ENCODE measurements at regions of chr5 and their contacts with region 1.

Region 1: GRCh38 chr5:156920042-156920860 is 42.8 kb downstream of the TIMD4 start:
- DNase-seq: peak; percentile 77
- ATAC-seq: peak; percentile 68
- H3K4me3 ChIP-seq: peak overlapping the region; percentile 63
- H3K27ac ChIP-seq: peak overlapping the region; percentile 93
- H3K4me1 ChIP-seq: peaks cover 17% of the 10 kb centered on the region
- H3K27me3 ChIP-seq: no peaks in the 10 kb centered on the region
- CTCF ChIP-seq: no peak
- EP300 ChIP-seq: peak; percentile 80 to 88; a peak in 3 of 4 replicates
- POLR2A ChIP-seq: no peak
- RAD21 ChIP-seq: no peak

Region 2: DNA sequence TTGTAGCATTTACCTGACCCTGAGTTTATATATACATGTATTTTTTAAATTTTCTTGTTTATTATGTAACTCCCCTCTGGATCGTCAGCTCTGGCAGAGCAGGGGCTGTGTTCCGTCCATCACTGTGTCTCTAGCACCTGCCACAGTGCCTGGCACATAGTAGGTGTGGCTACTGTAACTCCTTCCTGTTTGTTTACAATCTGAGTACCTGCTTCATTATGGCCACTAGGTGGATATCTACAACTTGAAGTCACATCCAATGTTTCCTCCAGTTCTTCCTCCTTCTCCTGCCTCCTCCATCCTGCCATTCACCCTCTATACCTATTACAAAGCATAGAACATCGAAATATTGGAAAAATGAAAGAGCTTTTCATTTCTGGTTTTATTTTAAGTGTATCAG is 84.3 kb before region 1 on chr5:
- CTCF ChIA-PET with region 1: interaction called, 17 read pairs
- POLR2A ChIA-PET with region 1: interaction called, 7 read pairs
- RAD21 ChIA-PET with region 1: interaction called, 4 read pairs
- SMC1A ChIA-PET with region 1: interaction called, 19 read pairs
- in situ Hi-C with region 1: no loop called
- intact Hi-C with region 1: no loop called
- DNase-seq: no peak
- ATAC-seq: peak; percentile 88
- H3K4me3 ChIP-seq: no peak overlapping the region
- H3K27ac ChIP-seq: no peak overlapping the region
- H3K4me1 ChIP-seq: no peaks in the 10 kb centered on the region; the same call in 1 of the 2 replicates
- H3K27me3 ChIP-seq: no peaks in the 10 kb centered on the region
- CTCF ChIP-seq: peak; percentile 32 to 47 (median 39); a peak in 5 of 6 replicates
- EP300 ChIP-seq: no peak
- POLR2A ChIP-seq: no peak
- RAD21 ChIP-seq: peak; percentile 43

Region 3: GRCh38 chr5:156893517-156893916 is 26.7 kb before region 1 on chr5:
- CTCF ChIA-PET with region 1: interaction called, 26 read pairs
- POLR2A ChIA-PET with region 1: interaction called, 28 read pairs
- RAD21 ChIA-PET with region 1: interaction called, 218 read pairs
- SMC1A ChIA-PET with region 1: interaction called, 104 read pairs
- in situ Hi-C with region 1: no loop called
- intact Hi-C with region 1: loop called (anchors 2 kb)
- DNase-seq: peak; percentile 52
- ATAC-seq: peak; percentile 82
- H3K4me3 ChIP-seq: no peak overlapping the region
- H3K27ac ChIP-seq: peak overlapping the region; percentile 47; the same call in 1 of the 2 replicates
- H3K4me1 ChIP-seq: peaks cover 23% of the 10 kb centered on the region
- H3K27me3 ChIP-seq: no peaks in the 10 kb centered on the region
- CTCF ChIP-seq: no peak
- EP300 ChIP-seq: peak in 1 of 2 experiments; percentile 51; a peak in 1 of 4 replicates
- POLR2A ChIP-seq: no peak
- RAD21 ChIP-seq: no peak

Region 4: DNA sequence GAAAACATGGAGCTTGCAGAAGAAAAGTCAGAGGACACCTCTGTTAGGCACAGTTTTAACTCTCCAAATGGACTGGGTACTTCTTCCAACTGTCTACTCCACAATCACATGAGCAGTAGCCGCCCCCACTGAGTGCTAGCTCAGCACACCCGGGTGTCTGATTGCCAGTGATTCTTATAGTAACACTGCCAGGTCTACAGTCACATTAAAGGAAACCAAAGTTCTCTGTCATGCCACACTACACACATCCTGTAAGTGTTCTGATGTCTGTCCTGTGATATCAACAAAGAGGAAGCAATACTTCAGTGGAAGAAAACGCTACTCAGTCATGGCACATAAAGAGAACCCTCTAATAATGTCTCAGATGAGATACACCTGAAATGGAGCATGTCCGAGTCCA is 188.7 kb after region 1 on chr5 and contains the start of gene HAVCR2:
- CTCF ChIA-PET with region 1: no interaction called
- POLR2A ChIA-PET with region 1: interaction called, 3 read pairs
- RAD21 ChIA-PET with region 1: interaction called, 3 read pairs
- SMC1A ChIA-PET with region 1: interaction called, 6 read pairs
- in situ Hi-C with region 1: no loop called
- intact Hi-C with region 1: loop called (anchors 10 kb)
- DNase-seq: peak; percentile 83
- ATAC-seq: peak; percentile 90
- H3K4me3 ChIP-seq: peak within 1 kb of the TSS; percentile 46
- H3K27ac ChIP-seq: peak within 1 kb of the TSS; percentile 87
- H3K4me1 ChIP-seq: peaks cover 12% of the 10 kb centered on the region
- H3K27me3 ChIP-seq: no peaks in the 10 kb centered on the region
- CTCF ChIP-seq: no peak
- EP300 ChIP-seq: 0 out of 4 replicates have a peak, but pooled peaks of 1 of the 2 experiments have one; percentile 0
- POLR2A ChIP-seq: 0 out of 2 replicates have a peak, but pooled peaks have one; percentile 41
- RAD21 ChIP-seq: no peak
- polyA plus RNA-seq, gene HAVCR2: 7.2 to 7.5 TPM

Region 5: GRCh38 chr5:157142317-157143126 is 222.3 kb after region 1 on chr5 and contains the start of gene MED7:
- CTCF ChIA-PET with region 1: interaction called, 4 read pairs
- POLR2A ChIA-PET with region 1: interaction called, 4 read pairs
- RAD21 ChIA-PET with region 1: interaction called, 19 read pairs
- SMC1A ChIA-PET with region 1: interaction called, 9 read pairs
- in situ Hi-C with region 1: no loop called
- intact Hi-C with region 1: no loop called
- DNase-seq: peak; percentile 99
- ATAC-seq: peak; percentile 100
- H3K4me3 ChIP-seq: peak within 1 kb of the TSS; percentile 88
- H3K27ac ChIP-seq: peak within 1 kb of the TSS; percentile 99
- H3K4me1 ChIP-seq: peaks cover 7% of the 10 kb centered on the region
- H3K27me3 ChIP-seq: no peaks in the 10 kb centered on the region
- CTCF ChIP-seq: no peak
- EP300 ChIP-seq: no peak
- POLR2A ChIP-seq: peak; percentile 96
- RAD21 ChIP-seq: no peak
- polyA plus RNA-seq, gene MED7: 42.6 to 47.7 TPM

Measured in GM12878 (cell line).